Activated naive CD8-positive, alpha-beta T cell treated with anti-CD3 and anti-CD28 coated beads, Interleukin-2, amount 10 ng/mL, durations not matched to agents 7 days and 5 days (primary cell): ENCODE measurements at regions of chr3 and their contacts with region 1.

Region 1: GRCh38 chr3:128650096-128651050 is at the start of gene RPN1:
- DNase-seq: peak; percentile 93
- ATAC-seq: peak; percentile 97
- H3K4me3 Mint-ChIP-seq: peak within 1 kb of the TSS; percentile 86
- H3K27ac Mint-ChIP-seq: peak within 1 kb of the TSS; percentile 88
- H3K4me1 Mint-ChIP-seq: peaks cover 27% of the 10 kb centered on the region
- H3K27me3 Mint-ChIP-seq: peaks cover 3% of the 10 kb centered on the region
- total RNA-seq, gene RPN1: 117 to 118 TPM

Region 2: GRCh38 chr3:128617557-128618397 is 32.6 kb before region 1 on chr3:
- POLR2A ChIA-PET with region 1: interaction called, 13 read pairs
- DNase-seq: peak; percentile 98
- ATAC-seq: peak; percentile 95
- H3K4me3 Mint-ChIP-seq: peak overlapping the region; percentile 89
- H3K27ac Mint-ChIP-seq: peak overlapping the region; percentile 86
- H3K4me1 Mint-ChIP-seq: peaks cover 30% of the 10 kb centered on the region
- H3K27me3 Mint-ChIP-seq: no peaks in the 10 kb centered on the region